SK-N-SH (cell line): ENCODE measurements at regions of chr1 and their contacts with region 1.

Region 1: GRCh38 chr1:162847839-162848453 is 13.0 kb downstream of the CCDC190 start:
- DNase-seq: peak; percentile 61
- H3K4me3 ChIP-seq: peak overlapping the region in 1 of 2 experiments; percentile 21; a peak in 1 of 4 replicates
- H3K27ac ChIP-seq: no peak overlapping the region; a peak in 2 of 4 replicates
- H3K4me1 ChIP-seq: peaks cover 14 to 31% of the 10 kb centered on the region in 2 experiments
- H3K27me3 ChIP-seq: no peaks in the 10 kb centered on the region
- CTCF ChIP-seq: peak; percentile 98
- EP300 ChIP-seq: no peak; a peak in 1 of 4 replicates
- RAD21 ChIP-seq: peak; percentile 90

Region 2: DNA sequence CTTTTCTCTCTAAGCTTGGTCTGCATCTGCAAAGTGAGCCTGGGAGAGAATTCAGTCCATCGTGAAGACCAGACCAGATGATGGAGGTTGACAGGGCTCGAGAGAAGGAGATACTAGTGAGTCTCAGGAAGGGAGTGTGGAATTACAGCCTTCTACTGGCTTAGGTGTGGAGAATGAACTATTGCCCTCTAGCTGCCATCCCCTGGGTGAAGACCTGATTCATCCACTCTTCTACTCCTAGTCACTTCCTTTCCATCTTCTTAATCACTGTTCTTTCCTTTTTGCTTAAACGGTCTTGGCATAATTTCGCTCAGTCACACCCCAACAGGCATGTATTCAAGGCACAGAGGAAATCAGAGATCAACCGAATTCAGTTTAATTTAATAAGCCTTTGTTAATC is 91.4 kb before region 1 on chr1:
- CTCF ChIA-PET with region 1: no interaction called
- POLR2A ChIA-PET with region 1: no interaction called
- DNase-seq: no peak
- H3K4me3 ChIP-seq: no peak overlapping the region
- H3K27ac ChIP-seq: peak overlapping the region in 1 of 2 experiments; percentile 24; a peak in 1 of 4 replicates
- H3K4me1 ChIP-seq: peaks cover 0 to 29% of the 10 kb centered on the region in 2 experiments; a peak in 1 of 4 replicates
- H3K27me3 ChIP-seq: no peaks in the 10 kb centered on the region
- CTCF ChIP-seq: no peak
- EP300 ChIP-seq: no peak
- RAD21 ChIP-seq: no peak

Region 3: GRCh38 chr1:162861101-162861500 is 13.2 kb after region 1 on chr1 and contains the start of gene CCDC190:
- CTCF ChIA-PET with region 1: interaction called, 39 read pairs
- POLR2A ChIA-PET with region 1: no interaction called
- DNase-seq: no peak
- H3K4me3 ChIP-seq: no peak within 1 kb of the TSS
- H3K27ac ChIP-seq: no peak within 1 kb of the TSS
- H3K4me1 ChIP-seq: peaks cover 3 to 31% of the 10 kb centered on the region in 2 experiments; a peak in 2 of 4 replicates
- H3K27me3 ChIP-seq: no peaks in the 10 kb centered on the region
- CTCF ChIP-seq: no peak
- EP300 ChIP-seq: no peak
- RAD21 ChIP-seq: no peak
- polyA plus RNA-seq, gene CCDC190: 0.13 and 0.21 TPM in 2 replicates